ENCODE measurements at regions of chr1 and their contacts with region 1.

Region 1: GRCh38 chr1:9270290-9270883 is 22.3 kb upstream of the SPSB1 start:
- DNase-seq: peak in 1 of 2 donors; percentile 63
- H3K4me3 ChIP-seq: no peak overlapping the region
- H3K27ac ChIP-seq: no peak overlapping the region
- H3K4me1 ChIP-seq: peaks cover 0 to 18% (median 8%) of the 10 kb centered on the region in 4 donors
- H3K27me3 ChIP-seq: no peaks in the 10 kb centered on the region
- CTCF ChIP-seq: no peak

Region 2: GRCh38 chr1:9121496-9122409 is 148.6 kb before region 1 on chr1:
- intact Hi-C with region 1: no loop called
- DNase-seq: no peak
- H3K4me3 ChIP-seq: no peak overlapping the region
- H3K27ac ChIP-seq: no peak overlapping the region
- H3K4me1 ChIP-seq: peaks cover 0 to 15% (median under 1%) of the 10 kb centered on the region in 4 donors
- H3K27me3 ChIP-seq: no peaks in the 10 kb centered on the region
- CTCF ChIP-seq: no peak

Region 3: DNA sequence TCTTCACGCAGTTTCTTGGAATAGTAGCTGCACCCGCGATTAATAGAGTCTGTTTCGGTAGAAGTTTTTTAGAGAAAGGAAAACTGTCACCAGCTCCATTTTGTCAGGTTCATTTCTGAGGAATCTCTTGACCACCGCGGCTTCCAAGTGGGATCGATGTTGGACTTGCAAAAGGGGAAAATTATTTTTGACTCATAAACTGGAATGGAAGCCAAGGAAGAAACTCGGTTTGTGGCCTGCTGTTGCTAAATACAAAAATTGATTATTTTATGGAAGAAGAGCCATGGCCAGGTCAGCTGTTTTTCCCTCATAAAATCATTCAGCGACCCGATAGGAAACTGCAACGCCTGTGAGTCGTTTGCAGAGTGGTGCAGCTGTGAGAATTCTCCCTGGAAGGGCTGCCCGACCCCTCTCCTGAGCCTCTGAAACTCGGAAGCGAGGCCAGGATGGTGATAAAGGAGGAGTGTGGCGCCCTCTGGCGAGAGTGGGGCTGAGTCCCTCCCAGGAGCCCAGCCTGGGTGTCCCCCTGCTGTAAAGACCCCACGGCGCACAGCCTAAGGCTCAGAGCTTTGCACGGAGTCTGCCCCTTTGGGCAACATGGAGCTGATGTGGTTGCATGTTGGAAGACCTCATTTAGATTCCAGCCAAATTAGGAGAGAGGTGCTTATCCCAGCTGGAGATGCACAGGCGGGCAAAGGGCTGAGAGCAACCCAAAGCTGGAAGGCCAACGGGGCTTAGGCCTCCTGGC is 185.3 kb after region 1 on chr1:
- intact Hi-C with region 1: loop called (anchors 5 kb)
- DNase-seq: peak in 1 of 2 donors; percentile 71
- H3K4me3 ChIP-seq: no peak overlapping the region
- H3K27ac ChIP-seq: peak overlapping the region in 1 of 2 donors; percentile 20
- H3K4me1 ChIP-seq: peaks cover 0 to 26% (median 12%) of the 10 kb centered on the region in 4 donors
- H3K27me3 ChIP-seq: no peaks in the 10 kb centered on the region
- CTCF ChIP-seq: peak; percentile 74 to 76

Region 4: DNA sequence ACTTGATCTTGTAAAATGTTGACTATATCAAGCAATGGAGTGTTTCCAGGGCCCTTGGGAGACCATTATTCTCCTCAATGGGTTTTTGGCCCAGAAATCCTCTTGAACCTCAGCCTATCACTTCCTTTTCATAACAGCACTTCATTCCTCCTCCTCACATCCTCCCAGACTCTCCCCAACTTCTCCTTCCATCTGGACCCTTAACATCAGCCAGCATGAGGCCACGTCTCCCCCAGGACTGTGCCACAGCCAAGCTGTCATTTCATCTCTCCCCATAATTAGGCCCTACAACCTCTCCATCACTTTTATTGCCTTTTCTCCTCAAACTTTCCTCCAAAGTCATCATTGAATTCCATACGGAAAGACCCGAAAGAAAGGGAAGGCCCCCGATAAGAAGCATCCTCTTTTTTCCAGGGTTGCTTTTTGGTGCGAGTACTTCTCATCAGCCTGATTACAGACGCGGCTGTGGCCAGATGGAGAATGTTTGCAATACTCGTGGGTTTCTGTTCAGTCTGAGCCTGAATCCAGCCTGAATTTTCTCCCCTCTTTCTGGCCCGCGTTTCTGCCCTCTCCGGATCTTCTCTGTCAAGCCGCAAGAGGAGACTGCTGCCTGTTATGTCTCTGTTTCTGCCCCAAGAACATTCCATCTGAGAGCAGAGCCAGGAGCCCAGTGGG is 216.2 kb after region 1 on chr1:
- intact Hi-C with region 1: loop called (anchors 5 kb)
- DNase-seq: no peak
- H3K4me3 ChIP-seq: no peak overlapping the region
- H3K27ac ChIP-seq: no peak overlapping the region
- H3K4me1 ChIP-seq: peaks cover 0 to 5% (median 0%) of the 10 kb centered on the region in 4 donors
- H3K27me3 ChIP-seq: no peaks in the 10 kb centered on the region
- CTCF ChIP-seq: no peak